SK-N-SH (cell line): ENCODE measurements at regions of chr1 and their contacts with region 1.

Region 1: DNA sequence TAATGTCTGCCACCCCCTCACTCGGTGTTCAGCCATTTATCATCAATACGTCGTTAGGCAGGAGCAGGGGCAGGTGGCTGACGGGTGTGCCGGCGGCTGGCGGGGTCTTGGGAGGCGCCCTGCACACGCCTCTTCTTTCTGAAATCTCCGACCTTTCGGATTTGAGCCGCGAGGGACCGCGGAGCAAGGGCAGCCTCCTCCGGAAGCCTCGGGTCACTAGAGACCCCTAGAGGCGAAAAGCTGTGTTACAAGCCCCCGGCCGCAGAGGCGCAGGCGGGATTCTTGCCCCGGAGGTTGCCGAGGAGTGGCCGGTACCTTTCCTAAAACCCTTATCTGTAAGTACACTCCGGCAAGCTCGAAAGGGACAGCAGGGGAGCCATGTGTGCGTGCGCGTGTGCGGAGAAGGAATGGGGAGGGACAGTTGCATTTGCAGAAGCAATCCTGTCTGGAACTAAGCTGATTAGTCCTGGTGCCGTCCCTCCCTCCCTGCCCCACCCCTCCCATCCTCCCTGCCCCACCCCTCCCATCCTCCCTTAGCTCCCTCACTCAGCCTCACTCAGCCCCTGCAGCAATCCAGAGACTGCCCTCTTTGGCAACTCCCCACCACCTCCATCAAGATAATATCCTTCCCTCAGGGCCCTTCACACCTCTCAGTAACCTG is 11.0 kb downstream of the BRINP2 start:
- DNase-seq: peak; percentile 88
- H3K4me3 ChIP-seq: peak overlapping the region; percentile 37 to 54
- H3K27ac ChIP-seq: peak overlapping the region in 1 of 2 experiments; percentile 88; a peak in 2 of 4 replicates
- H3K4me1 ChIP-seq: peaks cover 0 to 33% of the 10 kb centered on the region in 2 experiments; a peak in 2 of 4 replicates
- H3K27me3 ChIP-seq: peaks cover 8% of the 10 kb centered on the region; the same call in 1 of the 2 replicates
- CTCF ChIP-seq: peak; percentile 74
- EP300 ChIP-seq: no peak
- RAD21 ChIP-seq: peak; percentile 86

Region 2: DNA sequence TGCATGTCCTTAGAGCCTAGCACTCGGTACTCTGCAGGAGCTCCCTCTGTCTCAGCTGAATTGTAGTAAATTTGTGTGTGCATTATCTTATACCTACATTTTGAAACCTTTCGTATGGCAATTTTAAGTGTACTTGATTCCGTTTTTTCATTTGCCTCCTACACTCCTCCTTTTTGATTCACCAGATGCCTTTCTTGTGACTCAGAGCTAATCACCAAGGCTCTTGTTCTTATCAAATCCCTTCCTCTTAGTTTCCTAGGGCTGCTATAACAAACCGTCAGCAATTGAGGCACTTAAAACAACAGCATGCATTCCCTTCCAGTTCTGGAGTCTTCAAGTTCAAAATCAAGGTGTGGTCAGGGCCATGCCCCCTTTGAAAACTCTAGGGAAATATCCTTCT is 278.3 kb before region 1 on chr1:
- CTCF ChIA-PET with region 1: interaction called, 131 read pairs
- POLR2A ChIA-PET with region 1: no interaction called
- DNase-seq: no peak
- H3K4me3 ChIP-seq: no peak overlapping the region
- H3K27ac ChIP-seq: no peak overlapping the region
- H3K4me1 ChIP-seq: peaks cover 0 to 13% of the 10 kb centered on the region in 2 experiments; a peak in 3 of 4 replicates
- H3K27me3 ChIP-seq: no peaks in the 10 kb centered on the region; the same call in 1 of the 2 replicates
- CTCF ChIP-seq: no peak
- EP300 ChIP-seq: no peak
- RAD21 ChIP-seq: no peak

Region 3: DNA sequence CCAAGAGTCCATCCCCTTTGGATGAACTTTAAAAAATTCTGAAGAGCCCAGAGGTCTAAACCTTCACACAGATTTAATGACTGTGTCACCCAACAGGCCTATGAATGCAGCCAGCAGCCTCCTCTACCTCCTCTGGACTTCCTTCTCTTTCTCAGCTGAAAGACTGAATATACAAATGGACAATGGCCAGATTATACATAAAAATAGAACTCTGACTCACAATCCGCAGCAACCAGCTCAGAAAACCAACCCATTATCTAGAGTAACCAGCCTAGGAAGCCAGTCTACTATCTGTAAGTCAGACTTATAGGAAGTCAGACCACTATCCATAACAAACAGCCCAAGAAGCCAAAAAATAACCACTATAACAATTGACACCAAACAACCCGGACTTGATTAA is 241.8 kb before region 1 on chr1:
- CTCF ChIA-PET with region 1: interaction called, 15 read pairs
- POLR2A ChIA-PET with region 1: no interaction called
- DNase-seq: no peak
- H3K4me3 ChIP-seq: no peak overlapping the region
- H3K27ac ChIP-seq: no peak overlapping the region
- H3K4me1 ChIP-seq: no peaks in the 10 kb centered on the region
- H3K27me3 ChIP-seq: no peaks in the 10 kb centered on the region
- CTCF ChIP-seq: no peak
- EP300 ChIP-seq: no peak
- RAD21 ChIP-seq: no peak

Region 4: GRCh38 chr1:177164380-177165068 is 17.2 kb before region 1 on chr1 and contains the start of gene ASTN1:
- CTCF ChIA-PET with region 1: interaction called, 47 read pairs
- POLR2A ChIA-PET with region 1: interaction called, 4 read pairs
- DNase-seq: peak; percentile 90
- H3K4me3 ChIP-seq: peak within 1 kb of the TSS; percentile 32 to 54; a peak in 2 of 4 replicates
- H3K27ac ChIP-seq: peak within 1 kb of the TSS in 1 of 2 experiments; percentile 90; a peak in 2 of 4 replicates
- H3K4me1 ChIP-seq: peaks cover 0 to 11% of the 10 kb centered on the region in 2 experiments; a peak in 2 of 4 replicates
- H3K27me3 ChIP-seq: peaks cover 11% of the 10 kb centered on the region; the same call in 1 of the 2 replicates
- CTCF ChIP-seq: no peak
- EP300 ChIP-seq: no peak
- RAD21 ChIP-seq: no peak
- polyA plus RNA-seq, gene ASTN1: 0.13 and 0.29 TPM in 2 replicates

Region 5: GRCh38 chr1:177170756-177171535 is 10.8 kb before region 1 on chr1 and contains the start of gene BRINP2:
- CTCF ChIA-PET with region 1: interaction called, 47 read pairs
- POLR2A ChIA-PET with region 1: no interaction called
- DNase-seq: peak; percentile 91
- H3K4me3 ChIP-seq: peak within 1 kb of the TSS; percentile 57 to 69
- H3K27ac ChIP-seq: peak within 1 kb of the TSS in 1 of 2 experiments; percentile 78; a peak in 2 of 4 replicates
- H3K4me1 ChIP-seq: peaks cover 0 to 14% of the 10 kb centered on the region in 2 experiments; a peak in 2 of 4 replicates
- H3K27me3 ChIP-seq: peaks cover 18% of the 10 kb centered on the region
- CTCF ChIP-seq: no peak
- EP300 ChIP-seq: no peak
- RAD21 ChIP-seq: no peak
- polyA plus RNA-seq, gene BRINP2: 0.12 and 0.62 TPM in 2 replicates

Region 6: GRCh38 chr1:177355595-177355994 is 173.8 kb after region 1 on chr1:
- CTCF ChIA-PET with region 1: interaction called, 11 read pairs
- POLR2A ChIA-PET with region 1: no interaction called
- DNase-seq: peak; percentile 41
- H3K4me3 ChIP-seq: no peak overlapping the region
- H3K27ac ChIP-seq: no peak overlapping the region
- H3K4me1 ChIP-seq: no peaks in the 10 kb centered on the region
- H3K27me3 ChIP-seq: no peaks in the 10 kb centered on the region
- CTCF ChIP-seq: peak; percentile 45
- EP300 ChIP-seq: no peak
- RAD21 ChIP-seq: peak; percentile 77

Region 7: DNA sequence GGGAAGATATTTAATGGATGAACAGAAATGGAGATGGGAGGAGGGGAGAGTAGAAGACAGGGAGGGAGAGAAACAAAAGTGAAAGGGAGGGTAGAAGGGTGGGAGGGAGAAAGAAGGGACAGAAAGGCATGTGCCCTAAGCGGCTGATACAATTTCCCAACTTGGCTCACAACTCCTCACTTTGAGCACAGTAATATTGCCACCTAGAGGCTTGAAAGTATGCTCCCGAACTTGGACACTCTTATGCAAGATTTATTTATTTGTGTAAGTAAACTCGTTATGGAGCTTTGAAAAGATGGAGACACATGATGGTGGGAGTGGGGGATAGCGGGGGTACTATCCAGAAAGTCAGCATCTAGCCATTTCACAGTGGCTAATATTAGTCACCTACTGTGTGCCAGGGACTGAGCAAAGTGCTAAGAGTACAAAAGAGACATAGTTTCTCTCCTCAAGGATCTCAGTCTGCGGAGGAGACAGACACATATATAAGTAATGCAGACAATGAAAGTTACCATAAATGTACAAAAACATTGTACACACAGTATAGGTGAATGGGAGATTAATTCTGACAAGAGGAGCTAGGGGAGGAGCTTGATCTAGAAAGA is 598.4 kb after region 1 on chr1:
- CTCF ChIA-PET with region 1: interaction called, 19 read pairs
- POLR2A ChIA-PET with region 1: no interaction called
- DNase-seq: peak; percentile 40
- H3K4me3 ChIP-seq: no peak overlapping the region
- H3K27ac ChIP-seq: no peak overlapping the region
- H3K4me1 ChIP-seq: peaks cover 0 to 9% of the 10 kb centered on the region in 2 experiments; a peak in 2 of 4 replicates
- H3K27me3 ChIP-seq: no peaks in the 10 kb centered on the region
- CTCF ChIP-seq: peak; percentile 42
- EP300 ChIP-seq: no peak
- RAD21 ChIP-seq: peak; percentile 84